ENCODE measurements at regions of chr15 and their contacts with region 1.

Region 1: GRCh38 chr15:43749690-43750345 is 3.6 kb downstream of the PDIA3 start:
- DNase-seq: peak; percentile 69
- ATAC-seq: peak; percentile 46
- H3K4me3 Mint-ChIP-seq: peak overlapping the region; percentile 92
- H3K27ac Mint-ChIP-seq: peak overlapping the region; percentile 82
- H3K4me1 Mint-ChIP-seq: peaks cover 45% of the 10 kb centered on the region
- H3K27me3 Mint-ChIP-seq: no peaks in the 10 kb centered on the region

Region 2: GRCh38 chr15:43329960-43330779 is 419.6 kb before region 1 on chr15 and contains the start of gene LCMT2:
- CTCF ChIA-PET with region 1: no interaction called
- POLR2A ChIA-PET with region 1: no interaction called
- intact Hi-C with region 1: loop called in 1 of 2 experiments (anchors 1 kb)
- DNase-seq: peak; percentile 93
- ATAC-seq: peak; percentile 91
- H3K4me3 Mint-ChIP-seq: peak within 1 kb of the TSS; percentile 91
- H3K27ac Mint-ChIP-seq: peak within 1 kb of the TSS; percentile 95
- H3K4me1 Mint-ChIP-seq: peaks cover 32% of the 10 kb centered on the region
- H3K27me3 Mint-ChIP-seq: no peaks in the 10 kb centered on the region
- total RNA-seq, gene LCMT2: 7.6 to 8.5 TPM

Region 3: DNA sequence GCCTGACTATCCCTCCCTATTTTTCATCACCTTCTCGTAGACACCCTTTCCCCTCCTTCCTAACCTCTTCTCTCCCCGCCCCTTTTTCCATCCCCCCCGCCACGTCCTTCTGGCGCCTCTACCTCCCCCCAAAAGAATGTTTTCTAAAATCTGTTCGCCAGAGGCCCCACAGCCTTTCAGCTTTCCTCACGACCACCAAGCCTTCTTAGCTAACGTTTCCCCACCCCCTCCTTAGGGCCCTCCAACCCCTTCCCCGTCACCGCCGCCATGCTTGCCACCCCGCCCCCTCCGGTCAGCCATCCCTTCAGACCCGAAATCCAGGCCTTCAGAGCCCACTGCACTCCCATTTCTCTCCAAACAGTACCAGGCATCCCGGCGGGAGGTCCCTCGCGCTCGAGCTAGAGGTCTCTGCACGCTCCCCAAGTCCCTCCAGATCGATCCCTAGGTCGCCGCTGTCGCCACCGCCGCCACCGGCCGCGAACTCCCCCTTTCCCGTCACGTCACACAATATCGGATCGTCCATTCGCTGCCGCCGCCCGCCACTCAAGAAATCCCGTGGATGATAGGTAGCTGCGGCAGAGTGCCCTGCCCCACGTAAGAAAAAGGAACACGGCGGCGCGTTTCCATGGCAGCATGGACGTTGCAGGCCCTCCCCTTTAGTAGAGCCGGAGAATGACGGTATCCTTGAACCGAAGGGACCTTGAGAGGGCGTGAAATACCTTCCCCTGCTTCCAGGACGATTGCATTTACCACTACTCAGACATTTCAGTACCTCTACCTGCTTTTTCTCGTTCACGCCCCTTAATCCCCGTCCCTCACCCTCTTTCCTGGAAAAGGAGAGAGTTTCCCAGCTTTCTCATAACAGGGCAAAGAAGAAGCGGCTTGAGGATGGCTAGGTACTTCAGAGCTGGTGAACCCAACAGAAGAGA is 256.9 kb before region 1 on chr15 and contains the start of gene TP53BP1:
- CTCF ChIA-PET with region 1: no interaction called
- POLR2A ChIA-PET with region 1: no interaction called
- intact Hi-C with region 1: loop called (anchors 2 to 5 kb)
- DNase-seq: peak; percentile 98
- ATAC-seq: peak; percentile 100
- H3K4me3 Mint-ChIP-seq: peak within 1 kb of the TSS; percentile 81
- H3K27ac Mint-ChIP-seq: peak within 1 kb of the TSS; percentile 93
- H3K4me1 Mint-ChIP-seq: peaks cover 30% of the 10 kb centered on the region
- H3K27me3 Mint-ChIP-seq: no peaks in the 10 kb centered on the region
- total RNA-seq, gene TP53BP1: 22.4 to 23.9 TPM

Region 4: GRCh38 chr15:43735416-43735815 is 14.4 kb before region 1 on chr15:
- CTCF ChIA-PET with region 1: no interaction called
- POLR2A ChIA-PET with region 1: no interaction called
- intact Hi-C with region 1: no loop called
- DNase-seq: no peak
- ATAC-seq: no peak
- H3K4me3 Mint-ChIP-seq: no peak overlapping the region
- H3K27ac Mint-ChIP-seq: no peak overlapping the region
- H3K4me1 Mint-ChIP-seq: peaks cover 6% of the 10 kb centered on the region
- H3K27me3 Mint-ChIP-seq: no peaks in the 10 kb centered on the region

Region 5: GRCh38 chr15:43776718-43777583 is 27.1 kb after region 1 on chr15 and contains the start of gene ELL3:
- CTCF ChIA-PET with region 1: no interaction called
- POLR2A ChIA-PET with region 1: interaction called, 5 read pairs
- intact Hi-C with region 1: loop called (anchors 1 to 2 kb)
- DNase-seq: peak; percentile 94
- ATAC-seq: peak; percentile 84
- H3K4me3 Mint-ChIP-seq: peak within 1 kb of the TSS; percentile 78
- H3K27ac Mint-ChIP-seq: peak within 1 kb of the TSS; percentile 92
- H3K4me1 Mint-ChIP-seq: peaks cover 19% of the 10 kb centered on the region
- H3K27me3 Mint-ChIP-seq: no peaks in the 10 kb centered on the region
- total RNA-seq, gene ELL3: 3.6 TPM

Region 6: GRCh38 chr15:43800286-43801141 is 50.7 kb after region 1 on chr15 and contains the start of gene HYPK:
- CTCF ChIA-PET with region 1: no interaction called
- POLR2A ChIA-PET with region 1: no interaction called
- intact Hi-C with region 1: no loop called
- DNase-seq: peak; percentile 95
- ATAC-seq: peak; percentile 97
- H3K4me3 Mint-ChIP-seq: peak within 1 kb of the TSS; percentile 85
- H3K27ac Mint-ChIP-seq: peak within 1 kb of the TSS; percentile 98
- H3K4me1 Mint-ChIP-seq: peaks cover 43% of the 10 kb centered on the region
- H3K27me3 Mint-ChIP-seq: no peaks in the 10 kb centered on the region
- total RNA-seq, gene HYPK: 14.0 to 16.4 TPM

Region 7: DNA sequence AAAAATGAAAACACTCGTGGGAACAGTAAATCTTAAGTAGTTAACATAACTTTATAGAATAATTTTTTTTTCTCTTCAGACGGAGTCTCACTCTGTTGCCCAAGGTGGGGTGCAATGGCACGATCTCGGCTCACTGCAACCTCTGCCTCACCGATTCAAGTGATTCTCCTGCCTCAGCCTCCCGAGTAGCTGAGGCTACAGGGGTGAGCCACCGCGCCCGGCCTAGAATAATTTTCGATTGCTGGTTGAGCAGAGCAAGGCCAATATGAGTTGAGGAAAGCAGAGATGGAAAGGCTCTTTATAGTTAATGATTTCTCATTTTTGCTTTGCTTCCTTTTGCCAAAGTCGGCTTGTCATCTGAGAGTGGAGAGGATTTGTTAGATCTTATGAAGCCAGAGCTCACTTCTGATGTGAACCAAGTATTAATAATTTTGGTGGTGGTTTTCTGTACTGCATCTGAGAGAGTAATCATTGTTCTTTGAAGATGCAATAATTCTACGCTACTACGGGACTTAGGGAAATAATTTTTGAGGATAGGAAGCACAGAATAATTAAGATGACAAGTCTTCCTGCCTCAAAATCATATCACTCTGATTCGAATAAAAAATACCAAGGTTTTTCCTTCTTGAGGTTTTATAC is 537.1 kb after region 1 on chr15:
- CTCF ChIA-PET with region 1: no interaction called
- POLR2A ChIA-PET with region 1: no interaction called
- intact Hi-C with region 1: loop called in 1 of 2 experiments (anchors 5 kb)
- DNase-seq: no peak
- ATAC-seq: no peak
- H3K4me3 Mint-ChIP-seq: peak overlapping the region; percentile 90
- H3K27ac Mint-ChIP-seq: peak overlapping the region; percentile 97
- H3K4me1 Mint-ChIP-seq: peaks cover 32% of the 10 kb centered on the region
- H3K27me3 Mint-ChIP-seq: peaks cover 2% of the 10 kb centered on the region

Region 8: GRCh38 chr15:45198337-45199135 is 1448.7 kb after region 1 on chr15:
- CTCF ChIA-PET with region 1: no interaction called
- POLR2A ChIA-PET with region 1: no interaction called
- intact Hi-C with region 1: loop called in 1 of 2 experiments (anchors 5 kb)
- DNase-seq: peak; percentile 94
- ATAC-seq: peak; percentile 63
- H3K4me3 Mint-ChIP-seq: no peak overlapping the region
- H3K27ac Mint-ChIP-seq: no peak overlapping the region
- H3K4me1 Mint-ChIP-seq: peaks cover 14% of the 10 kb centered on the region
- H3K27me3 Mint-ChIP-seq: no peaks in the 10 kb centered on the region

Measured in activated CD4-positive, alpha-beta T cell treated with anti-CD3 and anti-CD28 coated beads for 36 hours (primary cell).